ENCODE measurements at regions of chr2 and their contacts with region 1.

Region 1: DNA sequence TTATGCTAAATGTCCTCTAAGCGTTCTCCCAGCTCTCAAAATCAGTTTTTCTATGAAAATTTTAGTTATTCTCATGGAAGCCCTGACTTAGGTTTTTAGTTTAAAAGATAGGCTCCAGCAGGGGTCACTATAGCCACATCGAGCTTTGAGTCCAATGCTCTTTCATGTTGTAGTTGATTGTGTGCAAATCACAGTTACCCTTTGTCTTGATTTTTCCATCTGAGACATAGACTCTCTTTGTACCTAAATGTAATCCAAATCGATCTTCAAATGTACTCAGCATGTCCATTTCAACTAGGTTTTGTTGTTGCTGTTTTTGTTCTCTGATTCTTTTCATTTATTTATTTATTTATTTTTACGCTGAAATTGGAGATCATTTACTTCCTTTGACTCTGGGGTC is 26.4 kb upstream of the MSTN start:
- DNase-seq: peak in 1 of 3 donors; percentile 86
- ATAC-seq: peak; percentile 83
- H3K4me3 ChIP-seq: no peak overlapping the region
- H3K4me1 ChIP-seq: no peaks in the 10 kb centered on the region
- CTCF ChIP-seq: no peak

Region 2: DNA sequence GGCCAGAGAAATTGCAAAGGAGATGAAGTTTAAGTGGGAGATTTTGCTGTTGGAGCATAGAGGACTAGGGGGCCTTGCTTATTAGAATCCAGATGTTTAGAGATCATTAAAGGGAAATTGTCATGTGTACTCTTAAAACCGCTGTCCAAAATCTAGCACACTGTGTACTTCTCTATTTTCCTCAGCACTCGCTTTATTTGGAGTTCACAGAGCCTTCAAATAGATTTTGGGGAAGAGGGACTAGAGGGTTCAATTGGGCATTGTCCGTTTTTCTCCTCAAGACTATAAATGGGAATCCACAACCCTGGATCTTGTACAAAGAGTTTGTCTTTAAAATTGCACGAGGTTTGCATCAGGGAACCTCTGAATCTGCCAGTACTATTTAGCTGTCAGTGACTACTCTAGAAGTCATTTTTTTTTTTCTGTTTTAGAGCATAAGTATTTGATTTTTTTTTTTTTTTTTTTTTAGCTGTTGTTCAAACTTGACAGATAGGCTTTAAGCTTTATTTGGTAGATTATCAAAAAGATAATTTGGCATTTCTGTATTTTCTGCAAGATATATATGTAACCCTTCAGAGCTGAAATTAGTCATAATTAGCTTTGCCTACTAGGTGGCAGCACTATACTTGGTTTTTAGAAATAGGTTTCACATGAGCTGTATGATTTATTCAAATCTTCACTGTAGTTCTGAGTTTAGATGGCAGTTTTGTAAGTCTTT is 290.4 kb before region 1 on chr2:
- intact Hi-C with region 1: no loop called
- DNase-seq: no peak
- ATAC-seq: no peak
- H3K4me3 ChIP-seq: no peak overlapping the region
- H3K4me1 ChIP-seq: no peaks in the 10 kb centered on the region
- CTCF ChIP-seq: no peak

Region 3: DNA sequence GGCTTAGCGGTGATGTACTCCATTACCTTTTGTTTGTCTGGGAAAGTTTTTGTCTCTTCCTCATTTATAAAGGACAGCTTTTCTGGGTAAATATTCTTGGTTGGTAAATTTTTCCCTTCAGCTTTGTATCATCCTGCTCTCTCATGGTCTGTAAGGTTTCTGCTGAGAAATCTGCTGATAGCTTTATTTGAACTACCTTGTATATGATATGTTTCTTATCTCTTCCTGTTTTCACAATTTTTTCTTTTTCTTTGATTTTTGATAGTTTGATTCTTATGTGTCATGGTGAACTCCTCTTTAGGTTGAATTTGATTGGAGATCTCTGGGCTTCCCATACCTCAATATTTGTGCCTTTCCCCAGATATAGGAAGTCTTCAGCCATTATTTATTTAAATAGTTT is 71.1 kb before region 1 on chr2:
- intact Hi-C with region 1: no loop called
- DNase-seq: no peak
- ATAC-seq: no peak
- H3K4me3 ChIP-seq: no peak overlapping the region
- H3K4me1 ChIP-seq: no peaks in the 10 kb centered on the region
- CTCF ChIP-seq: no peak

Region 4: DNA sequence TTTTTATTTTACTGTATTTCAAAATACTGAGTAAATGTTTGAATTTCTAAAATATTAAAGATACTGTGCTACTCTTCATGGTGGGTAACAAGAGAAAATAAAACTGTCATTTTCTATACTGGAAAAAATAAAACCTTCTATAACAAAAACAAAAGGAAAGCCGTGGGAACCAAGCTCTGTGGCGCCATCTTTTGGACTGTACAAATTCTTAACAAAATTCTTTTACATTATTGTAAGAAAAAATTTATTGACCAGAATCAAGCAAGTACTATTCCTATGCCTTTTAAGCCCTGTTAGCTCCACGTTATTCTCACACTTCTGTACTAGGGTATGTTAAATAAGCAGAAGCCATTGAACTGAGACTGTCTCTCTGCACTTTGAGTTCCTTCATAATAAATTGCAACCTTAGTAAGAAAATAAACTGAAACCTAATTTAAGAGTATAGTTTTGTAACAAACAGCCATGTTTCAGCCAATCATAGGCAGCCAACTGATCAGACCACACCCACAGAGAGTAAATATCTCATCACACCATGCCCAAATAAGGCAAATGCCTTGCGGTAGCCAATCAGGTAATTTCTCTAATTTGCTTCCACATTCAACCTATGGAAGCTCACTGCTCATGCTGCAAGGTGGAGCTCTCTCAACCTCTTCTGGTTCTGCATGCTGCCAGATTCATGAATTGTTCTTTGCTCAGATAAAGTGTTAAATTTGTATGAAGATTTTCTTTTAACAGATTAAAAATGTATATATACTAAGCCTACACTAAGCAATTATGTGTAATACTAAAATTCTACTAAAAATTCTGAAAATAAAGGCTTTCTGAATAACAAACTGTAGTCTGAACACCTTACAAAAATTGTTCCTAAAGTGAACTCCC is 188.6 kb after region 1 on chr2:
- intact Hi-C with region 1: loop called in 1 of 2 experiments (anchors 5 kb)
- DNase-seq: peak in 1 of 3 donors; percentile 61
- ATAC-seq: peak; percentile 73
- H3K4me3 ChIP-seq: no peak overlapping the region
- H3K4me1 ChIP-seq: no peaks in the 10 kb centered on the region
- CTCF ChIP-seq: no peak

Region 5: DNA sequence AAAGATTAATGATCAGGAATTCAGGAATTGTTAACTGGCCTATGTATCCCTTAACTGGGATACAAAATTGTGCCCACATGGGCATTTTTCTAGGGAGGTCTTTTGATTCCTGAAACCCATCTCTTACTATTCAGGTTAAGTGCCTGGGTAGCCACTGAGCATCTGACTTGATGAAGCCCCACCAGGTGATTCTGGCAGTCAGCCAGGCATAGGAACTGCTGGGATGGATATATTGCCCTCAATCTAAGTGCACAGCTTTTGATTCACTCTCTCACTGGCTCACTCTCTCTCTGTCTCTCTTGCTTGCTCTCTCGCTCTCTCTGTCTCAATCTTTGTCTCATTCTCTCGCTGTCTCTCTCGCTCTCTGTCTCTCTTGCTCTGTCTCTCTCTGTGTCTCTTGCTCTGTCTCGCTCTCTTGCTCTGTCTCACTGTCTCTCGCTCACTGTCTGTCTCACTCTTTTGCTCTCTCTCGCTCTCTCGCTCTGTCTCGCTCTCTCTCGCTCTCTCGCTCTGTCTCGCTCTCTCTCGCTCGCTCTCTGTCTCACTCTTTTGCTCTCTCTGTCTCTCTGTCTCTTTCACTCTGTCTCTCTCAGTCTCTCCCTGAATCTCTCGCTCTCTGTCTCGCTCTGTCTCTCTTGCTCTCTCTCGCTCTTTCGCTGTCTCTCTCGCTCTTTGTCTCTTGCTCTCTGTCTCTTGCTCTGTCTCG is 276.7 kb after region 1 on chr2:
- intact Hi-C with region 1: loop called in 1 of 2 experiments (anchors 10 kb)
- DNase-seq: no peak
- ATAC-seq: no peak
- H3K4me3 ChIP-seq: no peak overlapping the region
- H3K4me1 ChIP-seq: no peaks in the 10 kb centered on the region
- CTCF ChIP-seq: no peak